Endothelial cell of umbilical vein (primary cell): ENCODE measurements at regions of chr5 and their contacts with region 1.

Region 1: DNA sequence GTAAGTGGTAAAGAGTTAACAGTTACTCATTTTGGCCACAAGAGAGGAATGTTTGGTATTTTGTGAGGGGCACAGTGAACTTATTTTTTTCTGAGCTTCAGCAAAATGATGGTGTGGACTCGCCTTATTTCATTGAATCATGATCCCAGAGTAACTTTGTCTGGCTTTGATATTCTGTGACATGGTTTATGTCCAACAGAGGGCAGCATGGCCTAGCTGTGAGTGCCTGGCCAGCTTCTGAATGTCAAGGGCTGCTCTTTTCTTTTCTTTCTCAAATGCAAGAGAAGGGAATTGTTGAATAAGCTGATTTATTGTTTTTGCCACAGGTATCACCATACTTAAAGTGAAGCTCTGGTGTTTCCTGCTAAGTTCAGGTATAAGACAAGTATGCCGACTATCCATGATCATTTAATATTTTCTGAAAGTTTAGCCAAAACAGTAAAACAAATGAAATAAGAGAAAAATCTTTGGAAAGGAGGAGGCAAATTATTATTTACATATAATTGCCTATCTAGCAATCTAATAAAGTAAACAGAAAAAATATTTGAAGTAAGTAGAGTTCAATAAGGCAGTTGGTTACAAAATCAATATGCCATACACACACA is 31.7 kb downstream of the MRPL22 start:
- DNase-seq: peak; percentile 74
- H3K4me3 ChIP-seq: no peak overlapping the region
- H3K27ac ChIP-seq: no peak overlapping the region
- H3K4me1 ChIP-seq: peaks cover 18% of the 10 kb centered on the region
- H3K27me3 ChIP-seq: no peaks in the 10 kb centered on the region
- CTCF ChIP-seq: peak; percentile 66 to 69
- POLR2A ChIP-seq: no peak

Region 2: GRCh38 chr5:154956712-154957111 is 15.9 kb before region 1 on chr5:
- CTCF ChIA-PET with region 1: interaction called, 16 read pairs
- POLR2A ChIA-PET with region 1: no interaction called
- dilution Hi-C with region 1: no loop called
- intact Hi-C with region 1: no loop called
- DNase-seq: no peak
- H3K4me3 ChIP-seq: no peak overlapping the region
- H3K27ac ChIP-seq: no peak overlapping the region
- H3K4me1 ChIP-seq: no peaks in the 10 kb centered on the region
- H3K27me3 ChIP-seq: no peaks in the 10 kb centered on the region
- CTCF ChIP-seq: no peak
- POLR2A ChIP-seq: no peak

Region 3: GRCh38 chr5:154986151-154986550 is 13.6 kb after region 1 on chr5:
- CTCF ChIA-PET with region 1: interaction called, 38 read pairs
- POLR2A ChIA-PET with region 1: no interaction called
- dilution Hi-C with region 1: no loop called
- intact Hi-C with region 1: no loop called
- DNase-seq: no peak
- H3K4me3 ChIP-seq: no peak overlapping the region
- H3K27ac ChIP-seq: no peak overlapping the region
- H3K4me1 ChIP-seq: peaks cover 10% of the 10 kb centered on the region
- H3K27me3 ChIP-seq: no peaks in the 10 kb centered on the region
- CTCF ChIP-seq: no peak
- POLR2A ChIP-seq: no peak

Region 4: DNA sequence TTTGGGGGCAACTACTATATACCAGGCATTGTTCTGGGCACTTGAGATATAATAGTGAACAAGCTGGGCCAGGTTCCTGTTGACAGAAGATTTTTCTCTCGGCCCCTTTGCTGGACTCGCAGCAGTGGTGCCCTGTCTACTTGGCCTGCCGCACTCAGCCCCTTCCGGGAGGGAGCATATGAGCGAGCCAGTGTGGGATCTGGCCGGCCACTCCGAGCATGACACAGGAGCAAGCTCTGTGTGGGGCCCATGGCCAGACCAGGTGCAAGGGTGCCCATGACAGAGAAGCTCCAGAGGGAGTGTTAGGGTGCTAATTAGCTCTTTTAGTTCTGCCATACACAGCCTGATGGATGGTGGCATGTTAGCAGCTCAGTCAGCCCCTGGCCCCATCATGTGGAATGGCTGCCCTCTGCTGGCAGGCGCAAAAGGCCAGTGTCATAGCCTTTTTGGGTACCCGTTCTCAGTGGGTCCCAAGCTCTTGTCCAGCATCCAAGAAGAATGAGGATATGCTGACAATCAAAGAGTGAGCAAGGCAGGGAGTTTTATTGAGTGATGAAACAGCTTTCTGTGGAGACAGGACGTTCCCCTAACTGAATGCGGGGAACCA is 31.7 kb after region 1 on chr5:
- CTCF ChIA-PET with region 1: interaction called, 127 read pairs
- POLR2A ChIA-PET with region 1: no interaction called
- dilution Hi-C with region 1: no loop called
- intact Hi-C with region 1: loop called (anchors 1 kb)
- DNase-seq: peak; percentile 56
- H3K4me3 ChIP-seq: no peak overlapping the region
- H3K27ac ChIP-seq: no peak overlapping the region
- H3K4me1 ChIP-seq: peaks cover 4% of the 10 kb centered on the region
- H3K27me3 ChIP-seq: no peaks in the 10 kb centered on the region
- CTCF ChIP-seq: peak; percentile 60 to 73
- POLR2A ChIP-seq: no peak

Region 5: GRCh38 chr5:155136216-155136850 is 163.8 kb after region 1 on chr5:
- CTCF ChIA-PET with region 1: interaction called, 11 read pairs
- POLR2A ChIA-PET with region 1: no interaction called
- dilution Hi-C with region 1: no loop called
- intact Hi-C with region 1: loop called (anchors 2 kb)
- DNase-seq: no peak
- H3K4me3 ChIP-seq: no peak overlapping the region
- H3K27ac ChIP-seq: no peak overlapping the region
- H3K4me1 ChIP-seq: no peaks in the 10 kb centered on the region
- H3K27me3 ChIP-seq: peaks cover 0 to 2% of the 10 kb centered on the region in 2 experiments
- CTCF ChIP-seq: no peak
- POLR2A ChIP-seq: no peak